ENCODE measurements at regions of chr10 and their contacts with region 1.

Region 1: GRCh38 chr10:71999360-72000072 is 35.3 kb downstream of the CHST3 start:
- DNase-seq: peak; percentile 86 to 93 (median 89)
- ATAC-seq: peak; percentile 63 to 80 (median 76)
- H3K4me3 ChIP-seq: peak overlapping the region in 3 of 12 donors; percentile 5 to 9 (median 8)
- H3K27ac ChIP-seq: peak overlapping the region; percentile 63 to 89 (median 82)
- H3K4me1 ChIP-seq: peaks cover 16 to 77% (median 59%) of the 10 kb centered on the region in 12 donors
- H3K27me3 ChIP-seq: no peaks in the 10 kb centered on the region
- CTCF ChIP-seq: no peak
- POLR2A ChIP-seq: no peak

Region 2: DNA sequence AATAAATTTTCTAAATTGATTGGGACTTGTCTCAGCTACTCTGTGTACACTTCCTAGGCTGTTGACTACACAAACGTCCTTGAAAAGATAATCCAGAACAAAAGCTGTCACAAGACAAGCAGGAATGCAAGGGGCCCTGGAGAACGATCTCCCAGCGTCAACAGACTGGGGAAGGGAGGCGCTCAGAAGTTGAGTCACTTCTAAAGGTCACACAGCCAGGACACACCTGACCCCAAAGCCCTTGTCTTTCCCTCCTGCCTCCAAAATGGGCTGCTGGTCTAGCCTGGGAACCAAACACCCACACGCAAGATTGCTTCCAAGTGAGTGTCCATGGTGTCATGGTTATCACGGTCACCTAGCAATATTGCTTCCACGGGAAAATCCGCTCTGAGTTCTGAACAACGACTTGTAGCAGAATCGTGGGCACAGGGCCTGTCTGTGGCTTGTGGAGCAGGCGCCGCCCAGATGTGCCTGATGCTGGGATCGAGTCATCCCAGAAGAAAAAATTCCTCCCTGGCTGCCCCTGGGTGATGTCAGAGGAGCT is 39.0 kb after region 1 on chr10:
- intact Hi-C with region 1: loop called in 1 of 10 experiments (anchors 5 kb)
- DNase-seq: no peak
- ATAC-seq: peak in 2 of 4 donors; percentile 20 to 40
- H3K4me3 ChIP-seq: no peak overlapping the region
- H3K27ac ChIP-seq: peak overlapping the region in 3 of 12 donors; percentile 9 to 14 (median 13)
- H3K4me1 ChIP-seq: peaks cover 0 to 35% (median 10%) of the 10 kb centered on the region in 12 donors
- H3K27me3 ChIP-seq: no peaks in the 10 kb centered on the region
- CTCF ChIP-seq: no peak
- POLR2A ChIP-seq: no peak